Colonic mucosa (tissue), 4 donors: ENCODE measurements at regions of chr6 and their contacts with region 1.

Region 1: GRCh38 chr6:30483677-30484279 is 5.5 kb upstream of the HLA-E start:
- DNase-seq: peak; percentile 68
- H3K4me3 ChIP-seq: no peak overlapping the region
- H3K27ac ChIP-seq: no peak overlapping the region
- H3K4me1 ChIP-seq: no peaks in the 10 kb centered on the region
- H3K27me3 ChIP-seq: peaks cover 15% of the 10 kb centered on the region
- CTCF ChIP-seq: peak; percentile 49

Region 2: DNA sequence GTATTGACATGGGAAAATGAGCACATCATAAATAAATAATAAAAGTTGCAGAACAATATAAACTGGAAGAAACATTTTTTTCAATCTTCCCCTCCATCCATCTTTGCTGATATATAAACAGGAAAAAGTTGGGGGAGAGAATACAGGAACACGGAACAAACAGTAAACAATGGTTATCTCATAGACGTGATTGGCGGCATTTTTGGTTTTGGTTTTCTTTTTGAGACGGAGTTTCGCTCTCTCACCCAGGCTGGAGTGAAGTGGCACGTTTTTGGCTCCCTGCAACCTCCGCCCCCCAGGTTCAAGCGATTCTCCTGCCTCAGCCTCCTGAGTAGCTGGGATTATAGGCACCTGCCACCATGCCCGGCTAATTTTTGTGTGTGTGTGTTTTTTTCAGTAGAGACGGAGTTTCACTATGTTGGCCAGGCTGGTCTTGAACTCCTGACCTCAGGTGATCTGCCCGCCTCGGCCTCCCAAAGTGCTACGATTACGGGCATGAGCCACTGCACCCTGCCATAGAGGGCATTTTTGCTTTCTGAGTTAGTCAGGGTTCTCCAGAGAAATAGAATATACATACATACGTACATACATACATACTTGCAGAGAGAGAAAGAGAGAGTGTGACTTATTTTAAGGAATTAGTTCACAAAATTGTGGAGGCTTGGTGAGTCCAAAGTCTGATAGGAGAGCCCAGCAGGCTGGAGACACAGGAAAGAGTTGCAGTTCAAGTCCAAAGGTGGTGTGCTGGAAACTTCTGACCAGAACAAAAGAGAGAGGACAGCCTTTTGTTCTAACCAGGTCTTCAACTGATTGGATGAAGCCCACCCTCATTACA is 49.9 kb after region 1 on chr6:
- intact Hi-C with region 1: loop called (anchors 2 kb)
- DNase-seq: no peak
- H3K4me3 ChIP-seq: no peak overlapping the region
- H3K27ac ChIP-seq: peak overlapping the region; percentile 44
- H3K4me1 ChIP-seq: no peaks in the 10 kb centered on the region
- H3K27me3 ChIP-seq: no peaks in the 10 kb centered on the region
- CTCF ChIP-seq: no peak

Region 3: DNA sequence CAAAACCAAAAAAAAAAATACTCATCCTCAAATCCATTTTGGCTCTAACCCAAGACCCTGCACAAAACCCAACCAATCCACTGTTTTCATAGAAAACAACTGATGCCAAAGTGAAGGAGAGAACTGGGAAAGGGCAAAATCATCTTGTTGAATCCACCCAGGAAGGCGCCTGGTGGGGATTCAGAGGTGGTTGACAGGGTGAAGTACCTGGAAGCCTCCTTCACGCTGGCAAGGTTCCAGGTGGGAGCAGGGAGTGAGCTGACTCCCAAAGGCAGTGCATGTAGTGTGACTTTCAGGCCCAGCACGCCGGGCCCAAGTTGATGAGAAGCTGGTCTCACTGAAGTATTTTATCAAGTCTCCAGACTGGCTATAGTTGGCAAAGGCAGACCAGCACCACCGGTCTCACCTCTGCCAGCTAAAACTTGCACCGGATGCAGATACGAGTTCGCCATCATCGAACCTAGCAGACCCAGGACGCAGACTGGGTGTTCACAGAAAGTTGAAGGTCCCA is 116.7 kb after region 1 on chr6:
- intact Hi-C with region 1: loop called (anchors 5 kb)
- DNase-seq: no peak
- H3K4me3 ChIP-seq: no peak overlapping the region
- H3K27ac ChIP-seq: no peak overlapping the region
- H3K4me1 ChIP-seq: no peaks in the 10 kb centered on the region
- H3K27me3 ChIP-seq: no peaks in the 10 kb centered on the region
- CTCF ChIP-seq: no peak

Region 4: DNA sequence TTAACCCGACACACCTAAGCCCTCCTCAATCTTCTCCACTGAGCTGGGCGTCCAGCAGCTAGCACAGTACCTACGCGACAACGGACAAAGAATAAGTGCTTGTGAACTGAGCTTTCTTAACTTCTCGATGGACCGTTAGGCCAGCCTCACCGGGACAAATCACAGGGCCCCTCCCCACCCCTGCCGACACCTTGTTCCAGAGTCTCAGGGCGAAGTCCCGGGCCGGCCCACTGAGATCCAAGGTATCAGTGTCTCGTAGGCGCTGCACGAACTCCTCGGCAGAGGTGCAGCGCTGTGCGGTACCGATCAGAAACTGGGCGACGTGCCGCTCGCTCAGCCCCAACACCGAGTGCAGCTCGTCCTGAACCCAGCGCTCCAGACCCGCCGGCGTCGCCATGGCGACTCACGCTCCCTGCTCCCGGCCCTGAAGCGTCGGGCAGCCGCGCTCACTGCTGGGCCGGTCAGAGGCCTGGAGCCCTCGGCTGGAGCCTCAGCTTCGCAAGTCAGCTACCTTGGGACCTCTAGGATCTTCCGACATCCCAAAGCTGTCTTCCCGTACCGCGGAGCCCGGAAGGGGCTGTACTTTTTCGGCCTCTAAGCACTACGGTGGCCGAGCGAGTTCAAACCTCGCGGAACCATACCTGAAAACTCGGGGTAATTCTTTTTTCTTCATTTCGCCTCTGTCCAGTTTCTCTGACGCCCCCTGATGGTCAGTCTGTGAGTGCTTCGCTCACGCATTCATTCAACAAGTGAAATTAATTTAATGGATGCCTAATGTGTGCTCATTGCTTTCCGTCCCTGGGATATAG is 188.9 kb after region 1 on chr6 and contains the start of gene DHX16:
- intact Hi-C with region 1: loop called (anchors 5 kb)
- DNase-seq: peak; percentile 98
- H3K4me3 ChIP-seq: peak within 1 kb of the TSS; percentile 96
- H3K27ac ChIP-seq: peak within 1 kb of the TSS; percentile 75
- H3K4me1 ChIP-seq: peaks cover 9% of the 10 kb centered on the region
- H3K27me3 ChIP-seq: no peaks in the 10 kb centered on the region
- CTCF ChIP-seq: peak; percentile 83
- total RNA-seq, gene DHX16: 25.9 to 35.1 TPM